Ascending aorta (tissue), 2 donors: ENCODE measurements at regions of chr11 and their contacts with region 1.

Region 1: GRCh38 chr11:134024420-134025081 is 44.3 kb upstream of the JAM3 start:
- DNase-seq: no peak
- H3K4me3 ChIP-seq: no peak overlapping the region
- H3K27ac ChIP-seq: no peak overlapping the region
- H3K4me1 ChIP-seq: peaks cover 0 to 2% of the 10 kb centered on the region in 2 donors
- H3K27me3 ChIP-seq: no peaks in the 10 kb centered on the region
- CTCF ChIP-seq: no peak

Region 2: GRCh38 chr11:133974836-133975487 is 49.6 kb before region 1 on chr11:
- intact Hi-C with region 1: loop called (anchors 1 kb)
- DNase-seq: no peak
- H3K4me3 ChIP-seq: no peak overlapping the region
- H3K27ac ChIP-seq: no peak overlapping the region
- H3K4me1 ChIP-seq: no peaks in the 10 kb centered on the region
- H3K27me3 ChIP-seq: no peaks in the 10 kb centered on the region
- CTCF ChIP-seq: no peak